GM18951 (cell line): ENCODE measurements at regions of chr11 and their contacts with region 1.

Region 1: DNA sequence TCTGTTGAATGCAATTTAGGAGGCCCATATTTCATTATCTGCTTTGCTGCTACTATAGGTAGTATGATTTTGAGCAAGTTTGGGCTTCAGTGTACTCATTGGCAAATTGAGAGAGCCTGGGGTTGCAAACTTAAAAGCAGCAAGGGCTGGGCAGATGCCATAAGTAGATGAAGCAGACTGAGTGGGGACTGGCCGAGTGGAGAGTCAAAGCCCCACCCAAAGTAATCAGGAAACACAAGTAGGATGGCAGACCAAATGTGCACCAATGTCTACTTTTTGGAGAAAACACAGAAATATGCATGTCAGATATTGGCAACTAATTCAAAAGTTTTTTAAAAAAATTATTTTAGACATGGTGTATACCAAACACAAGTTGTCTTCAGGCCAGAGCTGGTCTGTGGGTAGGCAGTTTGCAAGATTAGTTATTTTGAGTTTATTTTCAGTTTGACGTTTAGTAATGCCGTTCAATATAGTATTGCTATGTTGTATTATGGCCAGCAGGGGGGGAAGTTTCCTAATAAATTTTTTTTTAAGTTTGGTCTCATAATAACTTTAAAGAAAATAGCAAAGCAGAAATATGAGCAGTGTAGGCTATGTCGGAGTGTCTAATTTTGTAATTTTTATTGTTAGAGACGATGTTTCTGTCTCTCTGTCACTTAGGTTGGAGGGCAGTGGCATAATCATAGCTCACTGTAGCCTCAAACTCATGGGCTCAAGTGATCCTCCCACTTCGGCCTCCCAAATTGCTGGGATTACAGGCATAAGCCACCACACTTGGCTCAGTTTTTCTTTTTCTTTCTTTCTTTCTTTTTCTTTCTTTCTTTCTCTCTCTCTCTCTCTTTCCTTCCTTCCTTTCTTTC is 105.1 kb downstream of the HIPK3 start:
- POLR2A ChIP-seq: no peak

Region 2: DNA sequence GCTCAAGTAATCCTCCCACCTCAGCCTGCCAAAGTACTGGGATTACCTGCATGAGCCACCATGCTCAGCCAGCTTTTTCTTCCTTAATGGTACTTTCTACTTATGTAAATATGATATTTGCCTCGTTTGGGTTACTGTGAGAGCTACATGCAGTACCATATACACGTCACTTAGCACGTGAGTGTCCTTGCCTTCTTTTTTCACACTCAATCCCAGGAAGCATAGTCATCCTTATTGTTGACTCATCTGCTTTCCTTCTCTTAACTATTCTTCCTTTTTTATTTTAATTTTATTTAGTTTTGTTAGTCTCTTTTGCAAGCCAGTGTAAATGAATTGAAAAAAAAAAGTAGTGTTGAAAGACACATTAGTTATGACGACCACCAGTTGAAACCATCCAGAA is 100.8 kb after region 1 on chr11:
- in situ Hi-C with region 1: no loop called
- POLR2A ChIP-seq: no peak

Region 3: DNA sequence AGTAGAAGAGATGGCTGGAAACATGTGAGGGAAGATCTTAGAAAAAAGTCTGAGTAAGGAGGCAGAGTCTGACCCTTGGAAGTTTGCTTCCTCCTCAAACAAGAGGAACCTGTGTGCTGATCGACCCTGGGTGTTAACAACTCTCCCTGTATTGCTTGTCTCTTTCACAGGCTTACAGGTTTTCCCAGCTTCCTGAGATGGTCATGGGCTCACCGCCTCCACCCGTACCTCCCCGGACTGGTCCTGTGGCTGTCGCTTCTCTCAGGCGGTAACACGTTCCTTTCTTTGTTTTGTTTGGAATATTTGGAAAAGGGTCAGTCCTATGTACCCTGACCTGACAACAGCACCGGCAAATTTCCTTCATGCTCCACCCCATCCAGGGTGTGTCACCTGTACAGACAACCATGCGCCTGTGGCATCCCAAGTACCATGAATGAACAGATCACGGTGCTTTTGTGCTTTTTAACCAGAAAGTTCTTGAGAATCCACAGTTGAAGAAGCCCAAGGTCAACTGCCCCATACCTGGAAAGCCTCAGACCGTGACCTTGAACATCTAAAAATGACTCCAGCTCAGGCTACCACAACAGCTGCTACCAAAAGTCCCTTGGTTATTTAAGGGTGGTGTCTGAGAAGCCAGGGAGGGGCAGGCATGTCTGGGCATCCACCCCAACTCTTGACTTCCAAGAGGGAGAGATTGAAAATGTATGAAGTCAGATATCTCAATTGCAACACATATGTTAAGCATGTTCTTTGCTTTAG is 293.7 kb after region 1 on chr11:
- in situ Hi-C with region 1: no loop called
- POLR2A ChIP-seq: no peak

Region 4: GRCh38 chr11:33687733-33688479 is 325.6 kb after region 1 on chr11:
- in situ Hi-C with region 1: loop called (anchors 5 kb)
- POLR2A ChIP-seq: no peak